ENCODE measurements at regions of chr2 and their contacts with region 1.

Region 1: DNA sequence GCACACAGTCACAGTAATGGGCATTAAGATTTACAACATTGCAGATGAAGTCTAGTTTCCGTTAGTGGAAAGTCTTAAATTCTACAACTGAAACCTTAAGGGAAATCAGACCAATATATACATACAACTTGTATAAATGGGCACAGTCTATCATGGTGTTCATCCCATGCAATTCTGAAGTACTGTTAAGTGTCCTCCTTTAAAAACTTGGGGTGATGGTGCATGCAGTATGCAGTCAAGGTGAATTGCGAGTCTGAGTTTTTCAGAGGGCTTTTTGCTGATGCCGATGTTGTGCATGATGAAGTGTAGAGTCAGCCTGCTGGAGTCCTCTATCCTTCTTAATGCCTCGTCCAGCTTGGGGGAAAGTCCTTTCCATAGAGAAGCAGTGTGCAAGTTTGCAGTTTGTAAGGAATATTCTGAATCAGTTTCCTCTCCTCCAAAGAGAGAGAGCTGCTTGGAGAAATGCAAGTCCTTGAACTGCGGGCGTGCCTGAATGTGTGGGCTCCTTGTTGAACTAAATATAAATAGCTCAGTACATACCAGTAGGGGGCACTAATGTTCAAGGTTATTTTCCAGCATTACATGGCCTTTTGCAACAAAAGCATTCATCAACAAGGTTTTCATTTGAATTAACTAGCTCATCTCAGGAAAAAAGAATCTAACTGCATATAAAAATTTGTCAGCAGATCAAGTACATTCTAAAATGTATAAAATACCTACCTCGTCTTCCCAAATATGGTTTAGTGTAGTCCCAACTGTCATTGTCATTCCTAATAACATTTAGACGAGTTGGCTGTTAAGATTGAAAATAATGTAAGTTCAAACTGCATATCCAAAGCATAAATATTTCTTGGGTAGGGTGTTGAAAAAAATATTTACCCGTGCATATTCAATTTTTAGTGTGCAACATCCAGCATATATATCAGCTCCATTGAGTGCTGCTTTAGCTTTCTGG is 21.3 kb downstream of the HNRNPLL start:
- DNase-seq: peak; percentile 31
- H3K4me3 Mint-ChIP-seq: no peak overlapping the region
- H3K27ac Mint-ChIP-seq: no peak overlapping the region
- H3K4me1 Mint-ChIP-seq: peaks cover 19% of the 10 kb centered on the region
- H3K27me3 Mint-ChIP-seq: no peaks in the 10 kb centered on the region

Region 2: DNA sequence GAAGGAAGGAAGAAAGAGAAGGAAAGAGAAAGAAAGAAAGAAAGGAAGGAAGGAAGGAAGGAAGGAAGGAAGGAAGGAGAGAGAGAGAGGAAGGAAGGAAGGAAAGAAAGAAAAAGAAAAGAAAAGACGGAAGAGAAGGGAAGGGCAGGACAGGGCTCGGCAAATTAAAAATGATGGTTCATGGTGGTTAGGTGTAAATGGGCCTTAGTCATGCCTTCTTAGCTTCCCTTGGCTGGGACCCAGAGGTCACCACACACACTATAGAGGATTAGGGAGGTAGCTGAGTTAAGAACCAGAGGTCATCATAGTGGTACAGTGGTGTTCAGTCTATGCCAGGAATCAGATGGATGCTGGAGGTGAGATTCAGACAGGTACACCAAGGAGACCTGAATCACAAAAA is 195.1 kb before region 1 on chr2:
- CTCF ChIA-PET with region 1: no interaction called
- intact Hi-C with region 1: no loop called
- DNase-seq: no peak
- H3K4me3 Mint-ChIP-seq: no peak overlapping the region
- H3K27ac Mint-ChIP-seq: no peak overlapping the region
- H3K4me1 Mint-ChIP-seq: peaks cover 14% of the 10 kb centered on the region
- H3K27me3 Mint-ChIP-seq: no peaks in the 10 kb centered on the region

Region 3: DNA sequence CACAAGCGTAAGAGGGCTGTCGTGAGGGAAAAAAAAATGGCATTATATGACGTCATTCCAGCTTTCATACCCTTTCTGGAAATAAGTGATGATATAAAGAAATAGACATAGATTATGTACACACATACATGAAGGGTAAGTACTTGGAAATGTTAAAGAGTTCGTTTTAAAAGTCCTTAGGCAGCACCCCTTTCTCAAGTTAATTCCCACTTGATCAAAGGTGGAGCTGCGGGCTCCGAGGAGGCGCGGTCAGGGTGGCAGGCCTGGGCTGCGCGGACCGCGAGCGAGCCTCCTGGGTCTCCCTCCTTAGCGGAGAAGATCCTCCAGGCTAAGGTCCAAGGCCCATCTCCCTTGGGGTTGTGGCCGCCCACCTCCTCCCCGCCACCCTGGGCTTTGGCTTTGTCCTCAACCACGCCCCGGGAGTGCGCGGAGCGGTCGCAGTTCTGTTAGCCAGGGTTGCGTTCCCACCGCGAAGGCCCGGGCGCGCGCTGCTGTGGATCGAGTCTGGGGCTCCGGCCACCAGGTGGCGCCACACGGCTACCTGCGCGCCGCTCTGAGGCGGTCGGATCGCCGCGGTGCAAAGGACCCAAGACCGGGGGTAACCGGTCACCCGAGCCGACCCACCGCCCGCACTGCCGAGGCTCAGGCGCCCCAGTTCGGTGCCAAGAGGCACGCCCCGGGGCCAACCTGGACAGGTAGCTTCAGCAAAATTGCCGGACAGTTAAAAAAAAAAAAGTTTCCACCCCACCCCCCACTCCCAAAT is 45.5 kb before region 1 on chr2:
- CTCF ChIA-PET with region 1: interaction called, 18 read pairs
- intact Hi-C with region 1: loop called (anchors 1 kb)
- DNase-seq: peak; percentile 84
- H3K4me3 Mint-ChIP-seq: peak overlapping the region; percentile 54
- H3K27ac Mint-ChIP-seq: no peak overlapping the region
- H3K4me1 Mint-ChIP-seq: no peaks in the 10 kb centered on the region
- H3K27me3 Mint-ChIP-seq: peaks cover 5% of the 10 kb centered on the region

Region 4: GRCh38 chr2:38561691-38562090 is 19.8 kb before region 1 on chr2:
- CTCF ChIA-PET with region 1: interaction called, 27 read pairs
- intact Hi-C with region 1: no loop called
- DNase-seq: no peak
- H3K4me3 Mint-ChIP-seq: no peak overlapping the region
- H3K27ac Mint-ChIP-seq: no peak overlapping the region
- H3K4me1 Mint-ChIP-seq: no peaks in the 10 kb centered on the region
- H3K27me3 Mint-ChIP-seq: no peaks in the 10 kb centered on the region

Region 5: GRCh38 chr2:38665854-38666555 is 84.5 kb after region 1 on chr2 and contains the start of gene GALM:
- CTCF ChIA-PET with region 1: interaction called, 12 read pairs
- intact Hi-C with region 1: no loop called
- DNase-seq: peak; percentile 68
- H3K4me3 Mint-ChIP-seq: peak within 1 kb of the TSS; percentile 83
- H3K27ac Mint-ChIP-seq: peak within 1 kb of the TSS; percentile 97
- H3K4me1 Mint-ChIP-seq: peaks cover 69% of the 10 kb centered on the region
- H3K27me3 Mint-ChIP-seq: no peaks in the 10 kb centered on the region
- total RNA-seq, gene GALM: 31.3 to 31.9 TPM

Region 6: GRCh38 chr2:38720613-38721241 is 139.3 kb after region 1 on chr2:
- CTCF ChIA-PET with region 1: interaction called, 178 read pairs
- intact Hi-C with region 1: loop called (anchors 2 kb)
- DNase-seq: no peak
- H3K4me3 Mint-ChIP-seq: peak overlapping the region; percentile 11
- H3K27ac Mint-ChIP-seq: peak overlapping the region; percentile 86
- H3K4me1 Mint-ChIP-seq: peaks cover 65% of the 10 kb centered on the region
- H3K27me3 Mint-ChIP-seq: no peaks in the 10 kb centered on the region

Region 7: DNA sequence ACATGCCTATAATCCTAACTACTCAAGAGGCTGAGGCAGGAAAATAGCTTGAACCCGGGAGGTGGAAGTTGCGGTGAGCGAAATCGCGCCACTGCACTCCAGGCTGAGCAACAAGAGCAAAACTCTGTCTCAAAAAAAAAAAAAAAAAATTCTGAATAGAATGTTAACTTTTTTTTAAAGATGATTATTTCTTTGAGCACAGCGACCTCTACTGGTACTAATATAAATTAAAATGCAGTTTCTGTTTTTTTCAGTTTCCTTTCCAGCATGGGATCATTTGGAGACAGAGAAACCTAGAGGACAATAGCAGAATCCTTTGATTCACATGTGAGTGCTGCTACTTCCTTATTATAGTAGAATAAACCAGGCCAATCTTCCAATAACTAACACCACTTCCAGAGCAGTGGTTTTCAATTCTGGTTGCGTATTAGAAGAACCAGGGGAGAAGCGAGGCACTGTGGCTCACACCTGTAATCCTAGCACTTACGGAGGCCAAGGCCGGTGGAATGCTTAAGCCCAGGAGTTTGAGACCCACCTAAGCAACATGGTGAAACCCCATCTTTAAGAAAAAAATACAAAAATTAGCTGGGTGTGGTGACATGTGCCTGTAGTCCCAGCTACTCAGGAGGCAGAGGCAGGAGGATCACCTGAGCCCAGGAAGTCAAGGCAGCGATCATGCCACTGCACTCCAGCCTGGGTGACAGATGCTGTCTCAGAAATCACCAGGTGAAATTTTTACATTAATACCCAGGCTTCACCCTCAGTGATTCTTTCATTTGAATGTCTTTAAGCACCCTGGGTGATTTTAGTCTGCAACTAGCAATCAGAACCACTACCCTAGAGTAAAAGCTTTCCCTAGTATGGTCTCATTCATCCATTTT is 159.6 kb after region 1 on chr2:
- CTCF ChIA-PET with region 1: interaction called, 35 read pairs
- intact Hi-C with region 1: loop called (anchors 1 kb)
- DNase-seq: peak; percentile 33
- H3K4me3 Mint-ChIP-seq: no peak overlapping the region
- H3K27ac Mint-ChIP-seq: peak overlapping the region; percentile 47
- H3K4me1 Mint-ChIP-seq: peaks cover 48% of the 10 kb centered on the region
- H3K27me3 Mint-ChIP-seq: no peaks in the 10 kb centered on the region

Region 8: DNA sequence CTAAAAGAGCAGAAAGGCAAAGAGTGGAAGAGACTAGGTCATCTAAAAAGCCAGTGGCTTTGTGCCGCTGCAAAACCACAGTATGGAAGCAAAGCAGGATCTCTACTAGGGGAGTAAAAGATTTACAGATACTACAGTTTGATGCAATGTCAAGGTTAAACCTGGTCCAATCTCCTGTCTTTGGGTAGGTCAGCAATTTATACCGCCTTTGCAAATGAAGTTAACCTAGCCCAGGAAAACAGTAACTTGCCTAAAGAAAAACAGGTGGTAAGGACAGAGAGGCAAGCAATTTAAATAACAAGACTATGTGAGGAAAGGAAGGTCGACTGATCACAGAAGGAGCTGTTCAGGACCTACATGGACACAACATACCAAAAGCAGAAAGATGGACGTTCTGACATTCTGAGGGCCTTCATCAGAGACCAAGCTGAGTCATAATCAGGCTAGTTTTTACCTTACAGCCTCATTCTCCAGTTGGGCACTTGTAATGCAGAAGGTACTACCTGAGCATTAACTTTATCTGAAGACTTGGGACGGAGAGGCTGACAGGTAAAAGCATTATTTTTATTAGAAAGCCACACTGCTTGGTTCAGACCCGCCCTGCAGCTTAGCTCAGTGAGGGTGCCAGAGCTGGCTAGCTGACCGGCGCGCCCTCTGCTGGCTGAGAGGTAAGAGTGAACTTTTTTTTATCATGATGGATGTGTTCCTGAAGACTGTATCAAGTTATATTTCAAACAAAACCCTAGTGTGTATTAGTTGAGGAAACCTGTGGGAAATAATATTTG is 646.4 kb after region 1 on chr2:
- CTCF ChIA-PET with region 1: no interaction called
- intact Hi-C with region 1: loop called (anchors 1 kb)
- DNase-seq: peak; percentile 89
- H3K4me3 Mint-ChIP-seq: peak overlapping the region; percentile 66
- H3K27ac Mint-ChIP-seq: no peak overlapping the region
- H3K4me1 Mint-ChIP-seq: peaks cover 15% of the 10 kb centered on the region
- H3K27me3 Mint-ChIP-seq: no peaks in the 10 kb centered on the region

Measured in activated naive CD4-positive, alpha-beta T cell treated with anti-CD3 and anti-CD28 coated beads for 36 hours (primary cell).